Dorsolateral prefrontal cortex (tissue), 120 donors: ENCODE measurements at regions of chr18 and their contacts with region 1.

Region 1: GRCh38 chr18:23416298-23416697 is 36.8 kb upstream of the RIOK3 start:
- DNase-seq: no peak
- H3K4me3 ChIP-seq: no peak overlapping the region
- H3K27ac ChIP-seq: peak overlapping the region in 21 of 59 donors; percentile 5 to 73 (median 36)
- H3K27me3 ChIP-seq: no peaks in the 10 kb centered on the region
- CTCF ChIP-seq: no peak

Region 2: GRCh38 chr18:22933206-22933957 is 482.9 kb before region 1 on chr18 and contains the start of gene RBBP8:
- intact Hi-C with region 1: loop called in 1 of 2 experiments (anchors 10 kb)
- DNase-seq: peak; percentile 64 to 91 (median 78)
- H3K4me3 ChIP-seq: peak within 1 kb of the TSS; percentile 53 to 97 (median 89)
- H3K27ac ChIP-seq: peak within 1 kb of the TSS; percentile 66 to 99 (median 93)
- H3K27me3 ChIP-seq: no peaks in the 10 kb centered on the region
- CTCF ChIP-seq: peak in 17 of 56 donors; percentile 0 to 31 (median 16)
- total RNA-seq, gene RBBP8: 10.0 to 28.5 (median 18.1) TPM

Region 3: GRCh38 chr18:23126376-23127056 is 289.8 kb before region 1 on chr18:
- intact Hi-C with region 1: loop called (anchors 5 kb)
- DNase-seq: no peak
- H3K4me3 ChIP-seq: peak overlapping the region in 2 of 59 donors; percentile 18 to 25
- H3K27ac ChIP-seq: peak overlapping the region in 1 of 59 donors; percentile 20
- H3K27me3 ChIP-seq: no peaks in the 10 kb centered on the region
- CTCF ChIP-seq: no peak

Region 4: GRCh38 chr18:23131693-23132319 is 284.5 kb before region 1 on chr18:
- intact Hi-C with region 1: loop called (anchors 5 kb)
- DNase-seq: peak in 3 of 10 donors; percentile 36 to 71 (median 63)
- H3K4me3 ChIP-seq: no peak overlapping the region
- H3K27ac ChIP-seq: peak overlapping the region in 1 of 59 donors; percentile 27
- H3K27me3 ChIP-seq: peaks cover 0 to 18% (median 0%) of the 10 kb centered on the region in 45 donors
- CTCF ChIP-seq: peak; percentile 63 to 90 (median 82)